Activated CD4-positive, alpha-beta memory T cell treated with anti-CD3 and anti-CD28 coated beads, Interleukin-2, amount 10 ng/mL, durations not matched to agents 7 days and 5 days (primary cell): ENCODE measurements at regions of chr12 and their contacts with region 1.

Region 1: GRCh38 chr12:54337280-54337842 is 12.4 kb downstream of the COPZ1 start:
- DNase-seq: no peak
- H3K4me3 Mint-ChIP-seq: no peak overlapping the region
- H3K27ac Mint-ChIP-seq: no peak overlapping the region
- H3K4me1 Mint-ChIP-seq: peaks cover 10% of the 10 kb centered on the region
- H3K27me3 Mint-ChIP-seq: no peaks in the 10 kb centered on the region

Region 2: GRCh38 chr12:54294152-54294952 is 43.0 kb before region 1 on chr12:
- CTCF ChIA-PET with region 1: interaction called, 12 read pairs
- POLR2A ChIA-PET with region 1: no interaction called
- DNase-seq: peak; percentile 75
- H3K4me3 Mint-ChIP-seq: no peak overlapping the region
- H3K27ac Mint-ChIP-seq: no peak overlapping the region
- H3K4me1 Mint-ChIP-seq: peaks cover 12% of the 10 kb centered on the region
- H3K27me3 Mint-ChIP-seq: peaks cover 18% of the 10 kb centered on the region

Region 3: GRCh38 chr12:54300732-54301427 is 36.5 kb before region 1 on chr12 and contains the start of gene NFE2:
- CTCF ChIA-PET with region 1: interaction called, 21 read pairs
- POLR2A ChIA-PET with region 1: no interaction called
- DNase-seq: peak; percentile 30
- H3K4me3 Mint-ChIP-seq: no peak within 1 kb of the TSS
- H3K27ac Mint-ChIP-seq: no peak within 1 kb of the TSS
- H3K4me1 Mint-ChIP-seq: peaks cover 36% of the 10 kb centered on the region
- H3K27me3 Mint-ChIP-seq: peaks cover 67% of the 10 kb centered on the region
- total RNA-seq, gene NFE2: 0.20 TPM in 1 of 2 experiments, not detected in the other

Region 4: DNA sequence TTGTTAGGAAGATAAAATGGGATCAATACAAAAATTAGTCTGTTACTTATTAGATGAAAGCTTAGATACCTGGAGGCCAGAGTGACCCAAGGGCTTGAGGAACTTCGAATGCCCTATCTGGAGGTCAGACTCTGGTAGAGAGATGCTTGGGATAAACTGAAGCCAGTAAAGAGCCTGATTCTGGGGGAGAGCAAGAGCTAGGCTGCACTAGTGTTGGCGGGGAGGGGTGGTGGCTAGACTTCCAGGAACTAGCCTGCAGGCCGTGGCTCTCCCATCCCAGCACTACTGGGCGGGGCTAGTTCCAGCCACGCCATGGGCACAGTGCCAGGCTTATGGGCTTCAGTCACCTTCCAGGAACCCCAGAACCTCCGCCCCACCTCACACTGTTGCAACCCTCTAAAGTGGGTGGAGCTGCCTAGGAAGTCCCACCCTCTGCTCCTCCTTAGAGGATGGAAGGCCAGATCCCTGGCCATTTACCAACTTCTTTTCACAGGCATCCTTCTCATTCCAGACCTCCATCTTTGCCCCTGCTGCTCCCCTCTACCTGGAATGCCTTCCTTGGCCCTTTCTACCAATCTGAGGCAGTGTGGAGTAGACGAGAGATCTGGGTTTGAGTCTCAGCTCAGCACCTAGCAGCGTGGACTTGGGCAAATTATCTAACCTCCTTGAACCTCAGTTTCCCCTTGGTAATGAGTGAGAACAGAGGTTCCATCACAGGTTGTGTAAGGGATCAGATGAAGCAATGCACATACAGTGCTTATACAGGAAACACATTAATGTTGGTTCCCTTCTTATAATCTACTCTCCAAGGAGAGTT is 30.2 kb before region 1 on chr12:
- CTCF ChIA-PET with region 1: interaction called, 21 read pairs
- POLR2A ChIA-PET with region 1: no interaction called
- DNase-seq: peak; percentile 56
- H3K4me3 Mint-ChIP-seq: no peak overlapping the region
- H3K27ac Mint-ChIP-seq: peak overlapping the region; percentile 29
- H3K4me1 Mint-ChIP-seq: peaks cover 33% of the 10 kb centered on the region
- H3K27me3 Mint-ChIP-seq: peaks cover 30% of the 10 kb centered on the region

Region 5: DNA sequence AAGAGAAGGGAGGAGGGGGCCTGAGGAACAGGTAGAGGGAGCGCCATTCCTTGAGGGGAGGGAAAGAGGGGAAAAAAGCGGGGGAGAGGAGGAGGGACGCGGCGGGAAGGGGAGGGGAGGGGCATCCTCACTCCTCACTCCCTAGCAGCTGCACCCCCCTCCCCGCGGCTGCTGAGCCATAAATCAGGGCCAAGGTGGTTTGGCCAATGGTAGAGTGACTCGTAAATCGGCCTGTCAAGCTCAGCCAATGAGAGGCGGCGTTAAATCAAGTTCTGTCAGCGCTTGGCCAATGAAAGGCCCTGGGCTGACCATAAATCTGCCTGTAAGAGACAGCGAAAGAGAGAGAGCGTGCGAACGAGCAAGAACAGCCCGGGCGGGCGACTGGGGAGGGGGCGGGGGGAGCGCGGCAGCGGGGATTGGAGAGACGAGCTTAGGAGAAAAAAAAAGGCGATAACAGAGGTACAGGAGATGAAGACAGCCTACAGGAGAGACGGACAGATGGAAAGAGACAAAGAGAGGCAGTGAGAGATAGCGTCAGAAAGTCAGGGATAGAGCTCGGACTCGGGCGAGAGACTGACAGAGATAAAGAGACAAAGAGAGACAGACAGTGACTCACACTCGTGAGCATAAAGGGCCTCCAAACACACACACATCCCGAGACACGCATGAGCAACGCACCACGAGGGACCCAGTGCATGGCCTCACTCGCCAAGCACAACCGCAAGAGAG is 21.8 kb after region 1 on chr12:
- CTCF ChIA-PET with region 1: interaction called, 40 read pairs
- POLR2A ChIA-PET with region 1: interaction called, 30 read pairs
- DNase-seq: peak; percentile 97
- H3K4me3 Mint-ChIP-seq: no peak overlapping the region
- H3K27ac Mint-ChIP-seq: no peak overlapping the region
- H3K4me1 Mint-ChIP-seq: peaks cover 23% of the 10 kb centered on the region
- H3K27me3 Mint-ChIP-seq: no peaks in the 10 kb centered on the region

Region 6: GRCh38 chr12:54368709-54369583 is 31.6 kb after region 1 on chr12:
- CTCF ChIA-PET with region 1: interaction called, 43 read pairs
- POLR2A ChIA-PET with region 1: no interaction called
- DNase-seq: peak; percentile 90
- H3K4me3 Mint-ChIP-seq: no peak overlapping the region
- H3K27ac Mint-ChIP-seq: no peak overlapping the region
- H3K4me1 Mint-ChIP-seq: peaks cover 54% of the 10 kb centered on the region
- H3K27me3 Mint-ChIP-seq: peaks cover 16% of the 10 kb centered on the region

Region 7: GRCh38 chr12:54431911-54432814 is 94.8 kb after region 1 on chr12:
- CTCF ChIA-PET with region 1: no interaction called
- POLR2A ChIA-PET with region 1: no interaction called
- DNase-seq: peak; percentile 52
- H3K4me3 Mint-ChIP-seq: peak overlapping the region; percentile 63
- H3K27ac Mint-ChIP-seq: peak overlapping the region; percentile 76
- H3K4me1 Mint-ChIP-seq: peaks cover 46% of the 10 kb centered on the region
- H3K27me3 Mint-ChIP-seq: peaks cover 25% of the 10 kb centered on the region